Left ventricle myocardium inferior (tissue), 1 donor: ENCODE measurements at regions of chr6 and their contacts with region 1.

Region 1: DNA sequence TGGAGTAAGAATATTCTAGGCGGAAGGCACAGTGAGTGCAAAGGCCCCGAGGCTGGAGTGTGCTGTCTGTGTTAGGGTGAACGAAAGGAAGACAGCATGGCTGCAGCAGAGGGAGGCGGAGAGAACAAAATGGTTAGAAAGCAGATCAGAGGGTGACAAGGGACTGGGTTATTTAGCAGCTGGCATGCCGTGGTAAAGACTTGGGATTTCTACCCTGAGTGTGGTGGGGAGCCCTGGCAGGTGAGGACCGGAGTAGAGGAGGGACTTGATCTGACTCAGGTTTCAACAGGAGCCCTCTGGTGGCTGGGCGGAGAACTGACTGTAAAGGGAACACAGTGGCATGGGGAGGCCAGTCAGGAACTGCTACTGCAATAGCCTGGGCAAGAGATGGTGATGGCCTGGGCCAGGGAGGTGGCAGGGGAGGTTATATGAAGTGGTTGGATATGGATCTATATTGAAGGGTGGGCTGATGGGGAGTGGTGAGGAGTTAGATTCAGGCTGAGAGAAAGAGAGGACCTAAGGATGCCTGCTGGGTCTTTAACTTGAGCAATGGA is 38.0 kb downstream of the PIM1 start:
- DNase-seq: peak; percentile 81
- H3K4me3 ChIP-seq: no peak overlapping the region
- H3K27ac ChIP-seq: no peak overlapping the region
- H3K4me1 ChIP-seq: no peaks in the 10 kb centered on the region
- H3K27me3 ChIP-seq: no peaks in the 10 kb centered on the region
- CTCF ChIP-seq: peak; percentile 78

Region 2: GRCh38 chr6:37038292-37039198 is 169.4 kb before region 1 on chr6:
- intact Hi-C with region 1: loop called (anchors 10 kb)
- DNase-seq: peak; percentile 64
- H3K4me3 ChIP-seq: no peak overlapping the region
- H3K27ac ChIP-seq: peak overlapping the region; percentile 36
- H3K4me1 ChIP-seq: peaks cover 3% of the 10 kb centered on the region
- H3K27me3 ChIP-seq: no peaks in the 10 kb centered on the region
- CTCF ChIP-seq: no peak